MCF 10A (cell line): ENCODE measurements at regions of chr15 and their contacts with region 1.

Region 1: DNA sequence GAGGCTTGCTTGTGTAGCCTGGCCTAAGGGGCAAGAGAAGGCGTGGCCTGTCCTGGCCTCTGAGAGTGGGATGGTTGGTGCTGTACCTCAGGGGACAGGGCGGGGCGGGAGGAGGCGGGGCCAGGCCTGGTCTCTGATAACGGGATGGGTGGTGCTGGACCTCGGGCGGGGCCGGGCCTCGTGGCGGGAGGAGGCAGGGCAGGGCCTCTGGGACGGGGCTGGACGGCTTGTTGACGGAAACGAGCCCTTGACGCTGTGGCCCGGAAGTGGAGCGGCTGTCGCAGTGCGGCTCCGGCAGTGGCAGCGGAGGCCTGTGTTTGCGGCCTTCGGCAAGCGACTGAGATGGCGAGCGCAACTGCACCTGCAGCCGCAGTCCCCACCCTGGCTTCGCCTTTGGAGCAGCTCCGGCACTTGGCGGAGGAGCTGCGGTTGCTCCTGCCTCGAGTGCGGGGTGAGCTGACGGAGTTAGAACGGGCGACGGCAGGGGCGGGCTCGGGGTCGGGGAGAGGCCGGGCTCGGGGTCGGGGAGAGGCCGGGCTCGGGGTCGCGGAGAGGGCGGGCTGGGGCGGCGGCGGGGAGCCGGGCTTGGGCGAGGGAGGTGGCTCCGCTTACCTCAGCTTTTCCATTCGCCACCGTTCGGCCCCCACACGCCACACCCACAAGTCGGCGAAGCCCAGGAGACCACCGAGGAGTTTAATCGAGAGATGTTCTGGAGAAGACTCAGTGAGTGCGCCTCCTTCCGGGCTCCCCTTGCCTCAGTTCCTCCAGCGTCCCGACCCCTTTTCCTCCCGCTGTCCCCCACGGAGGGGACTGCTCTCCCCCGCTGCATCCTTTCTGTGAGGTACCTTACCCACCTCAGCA is at the start of gene CCNDBP1:
- DNase-seq: peak; percentile 88
- H3K4me3 Mint-ChIP-seq: peak within 1 kb of the TSS; percentile 93
- H3K27ac Mint-ChIP-seq: peak within 1 kb of the TSS; percentile 93
- H3K4me1 Mint-ChIP-seq: peaks cover 10% of the 10 kb centered on the region
- H3K27me3 Mint-ChIP-seq: no peaks in the 10 kb centered on the region
- CTCF ChIP-seq: peak; percentile 30
- total RNA-seq, gene CCNDBP1: 45.5 and 50.4 TPM in 2 replicates

Region 2: DNA sequence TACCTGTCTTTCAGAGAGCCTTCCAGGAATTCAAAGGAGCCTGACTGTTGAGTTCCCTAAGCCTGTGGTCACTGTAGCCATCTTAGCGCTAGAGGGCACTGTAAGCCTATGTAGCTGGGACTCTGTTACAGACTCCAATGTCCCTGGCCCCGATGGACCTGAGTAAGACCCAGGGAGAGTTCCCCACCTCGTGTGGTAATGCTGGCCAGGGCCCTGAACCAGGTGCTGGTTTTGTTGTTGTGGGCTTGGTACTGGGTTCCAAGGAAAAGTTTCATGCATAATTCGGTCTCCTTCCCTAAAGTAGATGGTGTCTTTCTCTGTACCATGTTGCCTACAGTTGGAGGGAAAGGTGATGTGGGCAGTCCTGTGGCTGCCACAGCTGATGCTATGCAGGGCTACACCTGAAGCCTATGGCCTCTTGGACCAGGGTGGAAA is 480.9 kb before region 1 on chr15:
- CTCF ChIA-PET with region 1: no interaction called
- POLR2A ChIA-PET with region 1: no interaction called
- intact Hi-C with region 1: loop called (anchors 2 kb)
- DNase-seq: peak; percentile 83
- H3K4me3 Mint-ChIP-seq: no peak overlapping the region
- H3K27ac Mint-ChIP-seq: no peak overlapping the region
- H3K4me1 Mint-ChIP-seq: peaks cover 6% of the 10 kb centered on the region
- H3K27me3 Mint-ChIP-seq: no peaks in the 10 kb centered on the region
- CTCF ChIP-seq: peak; percentile 88

Region 3: GRCh38 chr15:43133430-43134156 is 51.8 kb before region 1 on chr15 and contains the start of gene TMEM62:
- CTCF ChIA-PET with region 1: interaction called, 3 read pairs
- POLR2A ChIA-PET with region 1: interaction called, 10 read pairs
- intact Hi-C with region 1: loop called (anchors 10 kb)
- DNase-seq: peak; percentile 87
- H3K4me3 Mint-ChIP-seq: peak within 1 kb of the TSS; percentile 77
- H3K27ac Mint-ChIP-seq: peak within 1 kb of the TSS; percentile 82
- H3K4me1 Mint-ChIP-seq: peaks cover 10% of the 10 kb centered on the region
- H3K27me3 Mint-ChIP-seq: no peaks in the 10 kb centered on the region
- CTCF ChIP-seq: no peak
- total RNA-seq, gene TMEM62: 16.3 and 16.9 TPM in 2 replicates

Region 4: DNA sequence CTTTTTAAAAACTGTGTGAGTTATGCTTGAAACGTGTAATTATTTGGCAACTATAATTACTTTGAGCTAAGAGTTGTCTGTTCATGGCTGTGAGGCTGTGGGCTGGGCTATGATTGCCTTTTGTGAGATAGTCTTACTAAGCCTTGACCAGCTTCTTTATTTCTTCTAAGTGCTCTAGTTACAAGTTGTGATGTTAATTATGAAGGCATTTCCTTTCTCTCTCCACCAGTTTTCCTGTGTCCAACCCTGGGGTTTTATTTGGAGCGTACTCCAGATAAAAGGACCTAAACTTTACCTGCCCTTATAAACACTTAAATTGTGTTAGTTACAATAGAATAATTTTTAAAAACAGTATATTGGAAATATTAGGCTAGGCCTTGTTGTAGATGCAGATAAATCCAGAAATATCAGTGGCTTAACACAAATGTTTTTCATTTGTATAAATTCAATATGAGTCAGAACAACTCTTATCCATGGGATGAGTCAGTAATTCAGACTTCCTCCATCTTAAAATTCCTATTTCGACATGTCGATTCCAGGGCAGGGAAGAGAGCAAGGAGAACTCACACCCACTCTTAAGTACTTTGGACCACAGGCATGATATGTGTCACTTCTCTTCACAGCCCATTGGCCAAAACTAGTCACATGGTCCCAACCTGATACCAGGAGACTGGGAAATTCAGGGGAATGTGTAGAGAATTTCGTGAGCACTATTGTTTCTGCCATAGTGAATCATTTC is 35.0 kb before region 1 on chr15:
- CTCF ChIA-PET with region 1: no interaction called
- POLR2A ChIA-PET with region 1: no interaction called
- intact Hi-C with region 1: no loop called
- DNase-seq: peak; percentile 94
- H3K4me3 Mint-ChIP-seq: no peak overlapping the region
- H3K27ac Mint-ChIP-seq: peak overlapping the region; percentile 42
- H3K4me1 Mint-ChIP-seq: no peaks in the 10 kb centered on the region
- H3K27me3 Mint-ChIP-seq: no peaks in the 10 kb centered on the region
- CTCF ChIP-seq: no peak

Region 5: GRCh38 chr15:43204016-43204901 is 18.9 kb after region 1 on chr15:
- CTCF ChIA-PET with region 1: interaction called, 17 read pairs
- POLR2A ChIA-PET with region 1: interaction called, 6 read pairs
- intact Hi-C with region 1: no loop called
- DNase-seq: peak; percentile 69
- H3K4me3 Mint-ChIP-seq: no peak overlapping the region
- H3K27ac Mint-ChIP-seq: peak overlapping the region; percentile 17
- H3K4me1 Mint-ChIP-seq: peaks cover 11% of the 10 kb centered on the region
- H3K27me3 Mint-ChIP-seq: no peaks in the 10 kb centered on the region
- CTCF ChIP-seq: peak; percentile 39

Region 6: GRCh38 chr15:43225201-43225949 is 40.0 kb after region 1 on chr15:
- CTCF ChIA-PET with region 1: interaction called, 12 read pairs
- POLR2A ChIA-PET with region 1: interaction called, 5 read pairs
- intact Hi-C with region 1: no loop called
- DNase-seq: peak; percentile 77
- H3K4me3 Mint-ChIP-seq: no peak overlapping the region
- H3K27ac Mint-ChIP-seq: no peak overlapping the region
- H3K4me1 Mint-ChIP-seq: peaks cover under 1% of the 10 kb centered on the region
- H3K27me3 Mint-ChIP-seq: no peaks in the 10 kb centered on the region
- CTCF ChIP-seq: peak; percentile 75